ENCODE measurements at regions of chr3 and their contacts with region 1.

Region 1: GRCh38 chr3:27681245-27681748 is 40.8 kb downstream of the EOMES start:
- DNase-seq: peak; percentile 28 to 51 (median 32)
- ATAC-seq: peak; percentile 75
- H3K4me3 ChIP-seq: no peak overlapping the region
- H3K27ac ChIP-seq: no peak overlapping the region
- H3K4me1 ChIP-seq: no peaks in the 10 kb centered on the region
- H3K27me3 ChIP-seq: no peaks in the 10 kb centered on the region
- CTCF ChIP-seq: peak; percentile 14 to 67 (median 49); a peak in 5 of 6 replicates
- EP300 ChIP-seq: no peak
- POLR2A ChIP-seq: no peak
- RAD21 ChIP-seq: peak in 1 of 2 experiments; percentile 42; a peak in 3 of 4 replicates

Region 2: GRCh38 chr3:27134165-27134796 is 547.0 kb before region 1 on chr3:
- CTCF ChIA-PET with region 1: no interaction called
- POLR2A ChIA-PET with region 1: no interaction called
- in situ Hi-C with region 1: no loop called
- intact Hi-C with region 1: loop called (anchors 2 kb)
- DNase-seq: peak; percentile 53 to 70 (median 58)
- ATAC-seq: peak; percentile 84
- H3K4me3 ChIP-seq: no peak overlapping the region
- H3K27ac ChIP-seq: no peak overlapping the region
- H3K4me1 ChIP-seq: no peaks in the 10 kb centered on the region
- H3K27me3 ChIP-seq: no peaks in the 10 kb centered on the region
- CTCF ChIP-seq: peak; percentile 80 to 83 (median 82)
- EP300 ChIP-seq: no peak
- POLR2A ChIP-seq: no peak
- RAD21 ChIP-seq: peak; percentile 67 to 80

Region 3: DNA sequence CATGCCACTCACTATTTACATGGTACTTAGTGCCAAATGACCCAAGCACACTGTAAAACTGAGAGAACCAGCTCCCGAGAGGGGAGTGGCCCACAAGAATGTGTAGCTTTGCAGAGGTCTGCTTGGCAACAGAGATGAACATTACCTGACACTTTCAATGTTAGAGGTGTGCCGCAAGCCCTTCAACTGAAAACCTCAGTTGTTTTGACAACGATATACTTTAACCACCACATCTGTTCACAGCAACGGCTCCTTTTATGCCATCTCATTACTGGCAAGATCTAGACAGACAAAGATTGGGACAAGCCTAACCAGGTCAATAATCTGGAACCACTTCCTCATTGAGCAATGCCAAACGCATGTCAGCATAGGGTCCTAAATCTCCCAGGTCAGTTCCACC is 335.8 kb before region 1 on chr3:
- CTCF ChIA-PET with region 1: no interaction called
- POLR2A ChIA-PET with region 1: no interaction called
- in situ Hi-C with region 1: no loop called
- intact Hi-C with region 1: no loop called
- DNase-seq: no peak
- ATAC-seq: no peak
- H3K4me3 ChIP-seq: no peak overlapping the region
- H3K27ac ChIP-seq: no peak overlapping the region
- H3K4me1 ChIP-seq: no peaks in the 10 kb centered on the region
- H3K27me3 ChIP-seq: no peaks in the 10 kb centered on the region
- CTCF ChIP-seq: no peak
- EP300 ChIP-seq: no peak
- POLR2A ChIP-seq: no peak
- RAD21 ChIP-seq: no peak